ENCODE measurements at regions of chrX and their contacts with region 1.

Region 1: DNA sequence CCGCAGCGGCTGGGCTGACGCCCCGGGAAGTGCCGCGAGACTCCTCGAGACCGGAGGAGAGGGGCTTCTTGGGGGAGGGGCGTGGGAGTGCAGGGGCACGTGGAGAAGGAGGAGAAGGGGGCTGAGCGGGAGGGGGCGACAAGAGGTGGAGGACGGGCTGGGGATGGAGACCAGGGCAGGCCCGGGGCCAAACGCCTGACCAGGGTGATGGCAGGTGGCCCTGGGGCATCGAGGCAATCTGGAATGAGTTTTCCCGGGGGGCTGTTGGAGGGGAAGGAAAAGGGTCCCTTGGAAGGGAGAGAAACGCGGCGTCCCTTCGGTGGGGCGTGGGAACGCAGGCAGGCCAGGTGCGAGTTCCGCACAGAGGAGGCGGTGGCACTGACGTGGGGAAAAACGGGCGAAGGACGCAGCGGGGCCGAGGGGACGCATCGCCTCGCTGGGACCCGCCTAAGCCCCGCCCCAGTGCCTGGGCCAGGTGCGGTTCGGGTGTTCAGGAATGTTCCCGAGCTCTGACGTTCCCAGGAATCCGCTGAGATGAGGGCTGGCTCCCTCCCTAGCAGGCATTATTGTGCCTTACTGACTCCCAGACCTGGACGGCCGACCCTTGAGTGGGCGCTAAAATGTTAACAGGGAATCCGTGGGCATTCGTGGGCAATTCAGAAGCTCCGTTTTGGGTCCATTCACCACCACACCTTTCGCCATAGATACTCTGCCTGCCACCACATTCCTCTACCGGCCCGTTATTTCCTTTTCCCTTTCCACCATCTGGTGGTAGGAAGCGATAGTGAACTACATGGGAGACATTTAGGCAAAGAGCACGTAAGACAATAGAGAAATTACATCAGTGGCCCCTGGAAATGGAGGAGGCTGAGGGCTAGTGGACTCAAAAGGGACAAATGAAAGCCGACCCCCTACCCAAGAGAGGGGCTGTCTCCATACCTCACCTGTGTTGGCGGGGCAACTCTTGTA is 795 bp upstream of the SH3KBP1 start:
- DNase-seq: peak; percentile 48
- H3K4me3 Mint-ChIP-seq: peak overlapping the region; percentile 73
- H3K27ac Mint-ChIP-seq: peak overlapping the region; percentile 78
- H3K4me1 Mint-ChIP-seq: peaks cover 41% of the 10 kb centered on the region
- H3K27me3 Mint-ChIP-seq: no peaks in the 10 kb centered on the region

Region 2: GRCh38 chrX:19544693-19545305 is 343.4 kb before region 1 on chrX:
- CTCF ChIA-PET with region 1: interaction called, 6 read pairs
- POLR2A ChIA-PET with region 1: no interaction called
- intact Hi-C with region 1: loop called (anchors 2 kb)
- DNase-seq: peak; percentile 31
- H3K4me3 Mint-ChIP-seq: no peak overlapping the region
- H3K27ac Mint-ChIP-seq: peak overlapping the region; percentile 6
- H3K4me1 Mint-ChIP-seq: peaks cover 30% of the 10 kb centered on the region
- H3K27me3 Mint-ChIP-seq: no peaks in the 10 kb centered on the region

Region 3: DNA sequence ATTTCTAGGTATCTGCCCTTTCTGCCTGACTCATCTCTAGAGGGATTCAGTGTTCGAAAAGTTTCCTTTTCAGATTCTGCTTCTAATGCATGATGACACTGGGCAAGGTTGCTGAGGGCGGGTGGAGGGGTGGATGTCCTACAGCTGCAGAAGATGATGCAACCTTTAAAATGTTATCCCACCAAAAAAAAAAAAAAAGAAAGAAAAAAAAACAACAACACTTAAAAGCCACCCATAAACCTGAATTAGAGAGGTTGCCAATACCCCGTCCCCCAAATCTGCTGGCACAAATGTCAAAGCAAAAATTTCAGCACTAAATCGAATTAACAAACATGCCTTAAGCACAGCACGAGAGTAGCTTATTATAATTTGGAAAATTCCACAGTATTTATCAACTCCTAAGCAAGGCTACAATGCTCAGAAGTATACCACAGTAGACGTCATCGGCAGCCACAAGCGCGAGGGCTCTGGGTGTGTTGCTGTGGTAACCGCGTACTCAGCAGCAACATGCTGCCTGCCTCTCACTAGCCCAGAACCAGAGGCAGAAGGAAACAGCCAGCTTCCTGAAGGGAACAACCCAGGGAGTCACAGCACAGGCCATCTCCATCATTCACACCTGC is 205.4 kb before region 1 on chrX:
- CTCF ChIA-PET with region 1: no interaction called
- POLR2A ChIA-PET with region 1: no interaction called
- intact Hi-C with region 1: loop called (anchors 2 kb)
- DNase-seq: peak; percentile 87
- H3K4me3 Mint-ChIP-seq: peak overlapping the region; percentile 67
- H3K27ac Mint-ChIP-seq: peak overlapping the region; percentile 91
- H3K4me1 Mint-ChIP-seq: peaks cover 86% of the 10 kb centered on the region
- H3K27me3 Mint-ChIP-seq: no peaks in the 10 kb centered on the region

Region 4: GRCh38 chrX:19747652-19748610 is 140.3 kb before region 1 on chrX:
- CTCF ChIA-PET with region 1: interaction called, 5 read pairs
- POLR2A ChIA-PET with region 1: no interaction called
- intact Hi-C with region 1: loop called (anchors 2 kb)
- DNase-seq: peak; percentile 85
- H3K4me3 Mint-ChIP-seq: peak overlapping the region; percentile 64
- H3K27ac Mint-ChIP-seq: peak overlapping the region; percentile 97
- H3K4me1 Mint-ChIP-seq: peaks cover 91% of the 10 kb centered on the region
- H3K27me3 Mint-ChIP-seq: no peaks in the 10 kb centered on the region

Region 5: GRCh38 chrX:19799319-19800182 is 88.6 kb before region 1 on chrX:
- CTCF ChIA-PET with region 1: interaction called, 4 read pairs
- POLR2A ChIA-PET with region 1: no interaction called
- intact Hi-C with region 1: loop called (anchors 1 kb)
- DNase-seq: peak; percentile 68
- H3K4me3 Mint-ChIP-seq: peak overlapping the region; percentile 87
- H3K27ac Mint-ChIP-seq: peak overlapping the region; percentile 100
- H3K4me1 Mint-ChIP-seq: peaks cover 59% of the 10 kb centered on the region
- H3K27me3 Mint-ChIP-seq: no peaks in the 10 kb centered on the region

Region 6: DNA sequence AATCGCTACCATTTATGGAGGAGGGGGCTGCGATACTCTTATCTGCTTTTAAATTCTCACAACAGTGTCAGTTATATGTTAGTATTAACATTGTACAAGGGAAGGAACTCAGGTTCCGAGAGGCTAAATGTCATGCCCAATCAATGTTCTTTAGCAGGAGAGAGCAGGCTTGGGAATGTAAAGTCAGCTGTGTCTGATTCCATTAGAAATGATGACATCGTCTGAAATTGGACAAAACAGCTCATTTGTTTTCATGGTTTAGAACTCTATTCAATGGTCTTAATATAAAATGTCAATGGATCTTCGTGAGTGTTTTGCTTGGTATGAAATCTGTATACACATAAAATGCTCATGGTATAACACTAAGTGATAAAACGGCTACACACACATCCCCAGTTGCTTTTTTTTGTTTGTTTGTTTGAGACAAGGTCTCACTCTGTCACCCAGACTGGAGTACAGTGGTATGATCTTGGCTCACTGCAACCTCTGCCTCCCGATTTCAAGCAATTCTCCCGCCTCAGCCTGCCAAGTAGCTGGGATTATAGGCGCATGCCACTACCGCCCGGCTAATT is 11.1 kb after region 1 on chrX:
- CTCF ChIA-PET with region 1: no interaction called
- POLR2A ChIA-PET with region 1: no interaction called
- intact Hi-C with region 1: no loop called
- DNase-seq: no peak
- H3K4me3 Mint-ChIP-seq: no peak overlapping the region
- H3K27ac Mint-ChIP-seq: no peak overlapping the region
- H3K4me1 Mint-ChIP-seq: no peaks in the 10 kb centered on the region
- H3K27me3 Mint-ChIP-seq: no peaks in the 10 kb centered on the region